ENCODE measurements at regions of chr4 and their contacts with region 1.

Region 1: GRCh38 chr4:86934771-86935565 is at the start of gene AFF1:
- DNase-seq: peak; percentile 77 to 96 (median 93)

Region 2: GRCh38 chr4:87006676-87007527 is 71.9 kb after region 1 on chr4:
- intact Hi-C with region 1: loop called (anchors 2 kb)
- DNase-seq: peak; percentile 82 to 96 (median 91)

Region 3: GRCh38 chr4:87093443-87094123 is 158.6 kb after region 1 on chr4:
- intact Hi-C with region 1: loop called (anchors 5 kb)
- DNase-seq: peak in 30 of 42 donors; percentile 25 to 82 (median 52)

Region 4: DNA sequence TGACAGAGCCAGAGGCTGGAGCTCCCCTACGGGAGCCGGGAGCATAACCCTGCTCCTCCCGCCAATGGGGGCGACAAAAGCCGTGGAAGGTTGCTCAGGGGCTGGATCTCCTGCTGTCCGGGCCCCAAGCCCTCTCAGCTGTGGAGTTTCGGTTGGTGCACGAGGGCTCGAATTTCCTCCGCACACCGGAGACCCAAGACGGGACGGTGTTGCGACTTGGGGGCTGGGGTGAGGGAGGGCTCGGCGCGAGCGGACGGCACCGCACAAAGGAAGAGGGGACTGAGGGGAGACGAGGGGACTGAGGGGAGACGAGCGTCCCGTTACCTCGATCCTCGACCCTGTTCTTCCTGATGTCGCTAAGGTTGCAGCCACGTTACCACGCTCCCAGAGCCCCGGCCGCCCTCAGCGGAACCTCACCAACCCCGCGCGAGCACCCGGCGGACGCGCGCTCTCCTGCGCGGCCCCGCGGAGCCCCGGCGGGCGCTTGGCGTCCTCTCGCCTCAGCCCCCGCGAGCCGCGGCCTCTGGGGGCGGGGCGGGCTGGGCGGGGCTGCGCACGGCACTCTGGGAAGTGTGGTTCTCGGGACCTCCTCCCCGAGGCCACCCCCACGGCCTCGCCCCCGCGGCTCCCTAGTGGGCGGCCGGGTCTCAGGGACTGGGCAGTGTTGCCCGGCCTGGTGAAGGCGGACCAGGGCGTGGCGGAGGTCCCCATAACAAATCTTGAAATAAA is 285.3 kb after region 1 on chr4 and contains the start of gene KLHL8:
- intact Hi-C with region 1: loop called (anchors 5 kb)
- DNase-seq: peak; percentile 52 to 94 (median 88)